ENCODE measurements at regions of chr14 and their contacts with region 1.

Region 1: DNA sequence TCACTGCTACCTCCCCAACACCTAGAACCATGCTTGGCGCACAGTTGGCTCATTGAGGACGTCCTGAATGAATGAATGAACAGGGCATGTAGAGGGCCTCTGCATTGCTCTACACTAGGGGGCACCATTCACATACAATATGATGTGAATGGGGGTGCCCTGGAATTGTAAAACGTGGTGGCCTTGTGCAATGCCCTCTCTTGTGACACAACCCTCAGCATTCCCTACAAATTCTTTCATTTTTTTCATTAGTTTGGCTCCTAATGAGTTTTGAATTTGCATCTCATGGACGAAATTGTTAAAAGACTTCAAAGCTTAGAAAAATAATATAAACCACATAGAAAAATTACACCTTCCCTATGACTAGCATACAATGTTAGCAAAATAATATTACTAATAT is 2.3 kb upstream of the DIO2 start:
- DNase-seq: peak; percentile 59
- ATAC-seq: peak; percentile 65
- H3K4me3 ChIP-seq: no peak overlapping the region
- H3K27ac ChIP-seq: no peak overlapping the region
- H3K4me1 ChIP-seq: peaks cover 4% of the 10 kb centered on the region
- H3K27me3 ChIP-seq: no peaks in the 10 kb centered on the region
- CTCF ChIP-seq: peak; percentile 68
- POLR2A ChIP-seq: no peak
- RAD21 ChIP-seq: peak; percentile 74

Region 2: GRCh38 chr14:80172375-80173051 is 41.1 kb before region 1 on chr14:
- CTCF ChIA-PET with region 1: no interaction called
- POLR2A ChIA-PET with region 1: no interaction called
- dilution Hi-C with region 1: no loop called
- in situ Hi-C with region 1: no loop called
- intact Hi-C with region 1: no loop called
- DNase-seq: peak; percentile 22
- ATAC-seq: no peak
- H3K4me3 ChIP-seq: no peak overlapping the region
- H3K27ac ChIP-seq: no peak overlapping the region
- H3K4me1 ChIP-seq: peaks cover 2% of the 10 kb centered on the region; the same call in 1 of the 2 replicates
- H3K27me3 ChIP-seq: no peaks in the 10 kb centered on the region
- CTCF ChIP-seq: no peak
- POLR2A ChIP-seq: no peak
- RAD21 ChIP-seq: no peak

Region 3: DNA sequence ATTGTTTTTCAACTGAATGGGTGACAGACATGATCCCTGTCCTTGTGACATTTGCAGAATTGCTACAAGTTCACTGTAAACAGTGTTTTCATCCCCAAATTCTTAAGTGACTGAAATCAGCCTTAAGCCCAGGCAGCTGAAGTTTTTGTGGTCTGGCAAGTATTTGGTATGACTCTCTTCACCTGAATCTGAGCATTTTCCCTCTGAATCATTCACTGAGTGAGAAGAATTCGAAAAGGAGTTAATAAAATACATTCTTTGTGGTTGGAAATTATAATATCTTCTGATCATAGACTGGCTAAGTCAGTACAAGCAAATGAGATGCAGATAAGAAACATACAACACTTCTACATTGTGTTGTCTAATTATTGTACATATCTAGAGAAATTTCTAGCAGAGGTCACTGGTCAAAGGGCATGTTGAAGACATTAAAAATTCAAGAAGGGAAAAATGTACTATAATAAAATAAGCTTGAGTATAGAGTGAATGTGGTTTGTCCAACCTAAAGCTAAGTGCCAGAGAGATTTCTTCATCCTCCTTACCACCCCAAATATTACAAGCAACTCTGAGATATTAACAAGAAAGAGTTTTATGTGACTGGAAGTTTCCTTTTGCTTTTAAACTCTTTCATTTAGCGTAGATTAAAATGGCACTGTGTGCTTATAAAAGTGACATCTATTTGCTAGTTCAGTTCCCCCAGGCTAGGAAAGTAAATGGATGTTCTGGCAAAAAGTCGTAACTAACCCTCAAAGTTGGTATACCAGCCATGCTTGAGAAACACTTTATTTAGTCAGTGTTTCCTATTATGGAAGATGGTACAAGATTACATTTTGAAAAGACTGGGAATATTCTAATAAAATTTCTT is 175.7 kb after region 1 on chr14:
- CTCF ChIA-PET with region 1: interaction called, 3 read pairs
- POLR2A ChIA-PET with region 1: no interaction called
- dilution Hi-C with region 1: no loop called
- in situ Hi-C with region 1: no loop called
- intact Hi-C with region 1: loop called (anchors 5 kb)
- DNase-seq: peak; percentile 92
- ATAC-seq: peak; percentile 90
- H3K4me3 ChIP-seq: no peak overlapping the region
- H3K27ac ChIP-seq: peak overlapping the region; percentile 46; the same call in 1 of the 2 replicates
- H3K4me1 ChIP-seq: peaks cover 13% of the 10 kb centered on the region
- H3K27me3 ChIP-seq: no peaks in the 10 kb centered on the region
- CTCF ChIP-seq: no peak
- POLR2A ChIP-seq: no peak
- RAD21 ChIP-seq: no peak

Region 4: DNA sequence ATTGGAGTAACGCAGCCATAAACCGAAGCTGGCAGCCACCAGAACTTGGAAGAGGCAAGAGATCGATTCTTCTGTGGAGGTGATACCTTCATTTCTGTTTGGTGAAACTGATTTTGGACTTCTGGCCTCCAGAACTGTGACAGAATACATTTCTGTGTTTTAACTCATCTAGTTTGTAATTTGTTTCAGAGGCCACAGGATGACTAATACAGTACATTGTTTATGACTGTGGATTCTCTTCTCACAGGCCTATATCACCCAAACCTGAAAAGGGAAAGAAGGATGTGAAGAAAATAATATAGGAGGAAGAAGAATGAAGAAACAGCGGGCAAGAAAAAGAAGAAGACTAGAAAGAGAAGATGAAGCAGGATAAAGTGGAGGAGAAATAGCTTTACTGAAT is 261.5 kb after region 1 on chr14:
- CTCF ChIA-PET with region 1: no interaction called
- POLR2A ChIA-PET with region 1: no interaction called
- dilution Hi-C with region 1: no loop called
- in situ Hi-C with region 1: no loop called
- intact Hi-C with region 1: loop called (anchors 5 kb)
- DNase-seq: peak; percentile 82
- ATAC-seq: peak; percentile 74
- H3K4me3 ChIP-seq: no peak overlapping the region
- H3K27ac ChIP-seq: peak overlapping the region; percentile 82
- H3K4me1 ChIP-seq: peaks cover 15% of the 10 kb centered on the region
- H3K27me3 ChIP-seq: no peaks in the 10 kb centered on the region
- CTCF ChIP-seq: no peak
- POLR2A ChIP-seq: no peak
- RAD21 ChIP-seq: no peak

Region 5: GRCh38 chr14:80615831-80616230 is 402.2 kb after region 1 on chr14:
- CTCF ChIA-PET with region 1: no interaction called
- POLR2A ChIA-PET with region 1: no interaction called
- dilution Hi-C with region 1: no loop called
- in situ Hi-C with region 1: no loop called
- intact Hi-C with region 1: loop called (anchors 10 kb)
- DNase-seq: no peak
- ATAC-seq: no peak
- H3K4me3 ChIP-seq: no peak overlapping the region
- H3K27ac ChIP-seq: no peak overlapping the region
- H3K4me1 ChIP-seq: peaks cover 5% of the 10 kb centered on the region
- H3K27me3 ChIP-seq: no peaks in the 10 kb centered on the region
- CTCF ChIP-seq: no peak
- POLR2A ChIP-seq: no peak
- RAD21 ChIP-seq: no peak

Region 6: DNA sequence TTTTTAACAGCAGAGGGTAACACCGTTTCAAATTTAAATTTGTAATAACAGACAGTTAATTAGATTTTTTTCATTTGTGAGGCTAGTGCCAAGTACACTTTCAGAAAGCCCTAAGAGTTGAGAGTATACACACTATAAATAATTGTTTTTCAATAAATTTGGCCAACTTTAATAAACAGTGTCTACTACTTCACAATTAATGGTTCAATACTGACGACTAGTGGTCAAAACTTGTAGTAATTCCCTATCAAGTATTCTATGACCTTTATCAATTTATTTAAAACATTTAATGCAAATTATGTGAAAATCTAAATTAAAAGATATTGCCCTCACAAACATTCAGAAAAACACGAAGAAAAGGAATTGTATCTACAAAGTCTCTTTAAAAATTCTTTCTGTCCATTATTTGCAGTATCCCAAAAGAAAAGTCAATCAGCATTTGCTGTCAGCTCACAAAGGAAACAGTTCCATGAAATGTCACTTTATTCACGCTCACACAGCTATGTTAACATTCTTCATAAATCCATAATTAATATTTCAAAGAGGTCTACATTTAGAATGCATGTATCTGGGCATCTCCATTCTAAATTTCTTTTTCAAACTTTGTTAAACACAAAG is 636.7 kb after region 1 on chr14:
- CTCF ChIA-PET with region 1: interaction called, 4 read pairs
- POLR2A ChIA-PET with region 1: no interaction called
- dilution Hi-C with region 1: no loop called
- in situ Hi-C with region 1: no loop called
- intact Hi-C with region 1: loop called (anchors 1 kb)
- DNase-seq: peak; percentile 68
- ATAC-seq: peak; percentile 78
- H3K4me3 ChIP-seq: no peak overlapping the region
- H3K27ac ChIP-seq: no peak overlapping the region
- H3K4me1 ChIP-seq: peaks cover 2% of the 10 kb centered on the region; the same call in 1 of the 2 replicates
- H3K27me3 ChIP-seq: no peaks in the 10 kb centered on the region
- CTCF ChIP-seq: peak; percentile 75
- POLR2A ChIP-seq: no peak
- RAD21 ChIP-seq: peak; percentile 78